Activated CD8-positive, alpha-beta T cell treated with anti-CD3 and anti-CD28 coated beads for 36 hours (primary cell): ENCODE measurements at regions of chr1 and their contacts with region 1.

Region 1: DNA sequence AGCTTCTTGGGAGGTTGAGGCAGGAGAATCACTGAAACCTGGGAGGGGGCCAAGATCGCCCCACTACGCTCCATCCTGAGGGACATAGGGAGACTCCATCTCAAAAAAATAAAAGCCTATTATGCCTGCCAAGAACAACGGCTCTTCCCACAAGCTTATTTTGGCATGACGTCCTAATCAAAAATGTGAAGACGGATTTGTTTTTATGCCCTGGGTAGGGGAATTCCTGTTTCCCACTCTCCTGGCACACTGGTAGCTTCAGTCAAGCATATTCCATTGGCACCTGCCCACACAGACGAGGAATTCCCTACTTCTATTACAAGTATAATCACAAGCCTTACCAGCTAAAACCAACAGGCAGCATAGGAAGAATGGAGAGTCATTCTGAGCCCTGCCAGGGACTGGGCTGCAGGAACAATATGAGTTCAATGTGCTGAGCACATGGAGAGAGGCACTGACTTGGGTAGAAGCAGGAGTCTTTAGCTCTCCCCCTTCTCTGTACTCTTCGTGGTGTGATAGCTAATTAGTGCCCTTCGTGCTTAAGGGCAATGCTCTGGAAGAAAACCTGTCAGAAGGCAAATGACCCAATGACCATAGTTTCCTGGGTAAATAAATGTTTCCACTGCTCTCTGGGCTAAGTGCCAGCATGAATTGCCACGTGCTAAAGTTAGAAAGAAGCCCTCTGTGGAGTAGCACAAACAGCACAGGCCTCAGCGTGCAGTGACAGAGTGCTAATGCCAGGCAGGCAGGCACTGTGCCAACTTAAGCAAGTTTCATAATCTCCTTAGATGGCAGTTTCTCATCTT is 16.8 kb downstream of the TNFSF4 start:
- DNase-seq: peak; percentile 16
- ATAC-seq: no peak
- H3K4me3 Mint-ChIP-seq: no peak overlapping the region
- H3K27ac Mint-ChIP-seq: no peak overlapping the region
- H3K4me1 Mint-ChIP-seq: peaks cover 8% of the 10 kb centered on the region
- H3K27me3 Mint-ChIP-seq: no peaks in the 10 kb centered on the region
- CTCF ChIP-seq: no peak

Region 2: DNA sequence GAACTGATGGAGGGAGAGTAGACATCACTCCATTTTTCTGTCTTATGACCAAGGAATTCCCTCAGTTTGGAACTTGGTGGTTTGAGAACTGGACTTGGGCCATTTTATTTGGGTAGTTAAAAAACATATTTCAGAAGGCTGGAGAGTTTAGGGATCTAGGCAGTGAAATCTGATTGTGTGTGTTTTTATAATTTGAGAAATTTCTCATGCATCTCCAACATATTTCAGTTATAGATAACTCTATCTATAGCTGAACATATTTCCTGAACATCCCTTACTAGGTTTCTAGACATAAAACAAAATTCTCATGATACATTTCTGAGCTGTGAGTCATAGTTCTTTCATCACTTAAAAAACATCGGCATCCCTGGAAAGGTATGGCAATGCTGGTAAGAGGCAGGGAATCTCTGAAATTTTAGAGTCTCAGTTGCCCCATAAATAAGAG is 428.7 kb before region 1 on chr1:
- CTCF ChIA-PET with region 1: no interaction called
- POLR2A ChIA-PET with region 1: no interaction called
- intact Hi-C with region 1: no loop called
- DNase-seq: no peak
- ATAC-seq: no peak
- H3K4me3 Mint-ChIP-seq: no peak overlapping the region
- H3K27ac Mint-ChIP-seq: no peak overlapping the region
- H3K4me1 Mint-ChIP-seq: peaks cover 73% of the 10 kb centered on the region
- H3K27me3 Mint-ChIP-seq: peaks cover 7% of the 10 kb centered on the region
- CTCF ChIP-seq: no peak

Region 3: GRCh38 chr1:173112129-173112528 is 78.2 kb before region 1 on chr1:
- CTCF ChIA-PET with region 1: no interaction called
- POLR2A ChIA-PET with region 1: no interaction called
- intact Hi-C with region 1: loop called (anchors 10 kb)
- DNase-seq: no peak
- ATAC-seq: no peak
- H3K4me3 Mint-ChIP-seq: no peak overlapping the region
- H3K27ac Mint-ChIP-seq: no peak overlapping the region
- H3K4me1 Mint-ChIP-seq: no peaks in the 10 kb centered on the region
- H3K27me3 Mint-ChIP-seq: no peaks in the 10 kb centered on the region
- CTCF ChIP-seq: no peak